GM12878 (cell line): ENCODE measurements at regions of chr16 and their contacts with region 1.

Region 1: DNA sequence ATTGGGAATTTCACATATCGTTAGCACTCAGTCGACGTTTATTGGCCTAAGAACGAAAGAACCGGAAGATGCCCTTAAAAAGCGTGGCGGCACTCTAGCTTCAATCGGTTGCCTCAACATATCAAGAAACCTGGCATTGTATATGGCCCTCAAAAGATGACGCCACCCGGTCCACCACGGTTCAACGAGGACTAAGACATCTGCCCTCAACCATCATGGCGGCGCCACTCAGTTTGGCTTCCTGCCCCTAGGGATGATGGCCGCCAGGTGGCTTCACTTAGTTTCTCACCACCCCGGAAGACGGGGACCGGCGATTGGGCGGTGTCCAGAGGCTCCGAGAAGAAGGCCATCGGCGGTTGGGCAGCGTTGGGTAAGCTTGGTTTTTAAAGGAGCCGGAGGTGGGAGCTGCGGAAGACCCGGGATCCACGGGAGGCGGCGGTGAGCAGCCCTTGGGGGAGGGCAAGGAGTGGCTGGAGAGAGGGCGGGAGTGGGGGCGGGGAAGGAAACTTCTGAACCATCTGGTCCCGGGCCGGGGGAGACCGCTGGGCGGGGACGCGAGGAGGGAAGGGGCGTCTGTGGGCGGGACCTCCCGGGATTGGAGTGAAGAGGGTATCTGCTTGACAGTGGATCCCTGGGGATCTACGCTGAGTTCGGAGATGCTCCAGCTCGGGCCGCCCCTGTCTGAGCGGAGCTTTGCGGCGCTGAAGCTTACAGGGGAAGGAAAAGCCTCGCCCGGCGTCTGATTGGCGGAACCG is at the start of gene PRR14:
- DNase-seq: peak; percentile 98
- ATAC-seq: peak; percentile 88
- H3K4me3 ChIP-seq: peak within 1 kb of the TSS; percentile 100
- H3K27ac ChIP-seq: peak within 1 kb of the TSS; percentile 91
- H3K4me1 ChIP-seq: peaks cover 15% of the 10 kb centered on the region
- H3K27me3 ChIP-seq: no peaks in the 10 kb centered on the region
- CTCF ChIP-seq: peak in 1 of 3 experiments; percentile 6; a peak in 1 of 6 replicates
- EP300 ChIP-seq: 0 out of 4 replicates have a peak, but pooled peaks of 1 of the 2 experiments have one; percentile 39
- POLR2A ChIP-seq: peak; percentile 26; the same call in 1 of the 2 replicates
- RAD21 ChIP-seq: no peak
- polyA plus RNA-seq, gene PRR14: 2.5 to 8.7 TPM

Region 2: GRCh38 chr16:30551781-30552180 is 98.8 kb before region 1 on chr16:
- CTCF ChIA-PET with region 1: no interaction called
- POLR2A ChIA-PET with region 1: no interaction called
- RAD21 ChIA-PET with region 1: no interaction called
- SMC1A ChIA-PET with region 1: no interaction called
- in situ Hi-C with region 1: no loop called
- intact Hi-C with region 1: no loop called
- DNase-seq: no peak
- ATAC-seq: no peak
- H3K4me3 ChIP-seq: no peak overlapping the region
- H3K27ac ChIP-seq: no peak overlapping the region
- H3K4me1 ChIP-seq: no peaks in the 10 kb centered on the region
- H3K27me3 ChIP-seq: no peaks in the 10 kb centered on the region
- CTCF ChIP-seq: no peak
- EP300 ChIP-seq: no peak
- POLR2A ChIP-seq: no peak
- RAD21 ChIP-seq: no peak

Region 3: GRCh38 chr16:30637942-30638341 is 12.6 kb before region 1 on chr16:
- CTCF ChIA-PET with region 1: interaction called, 16 read pairs
- POLR2A ChIA-PET with region 1: interaction called, 11 read pairs
- RAD21 ChIA-PET with region 1: interaction called, 10 read pairs
- SMC1A ChIA-PET with region 1: interaction called, 6 read pairs
- in situ Hi-C with region 1: no loop called
- intact Hi-C with region 1: no loop called
- DNase-seq: no peak
- ATAC-seq: peak; percentile 38
- H3K4me3 ChIP-seq: no peak overlapping the region
- H3K27ac ChIP-seq: no peak overlapping the region
- H3K4me1 ChIP-seq: no peaks in the 10 kb centered on the region
- H3K27me3 ChIP-seq: no peaks in the 10 kb centered on the region
- CTCF ChIP-seq: peak; percentile 61 to 70 (median 63); a peak in 5 of 6 replicates
- EP300 ChIP-seq: no peak
- POLR2A ChIP-seq: no peak
- RAD21 ChIP-seq: peak; percentile 58

Region 4: DNA sequence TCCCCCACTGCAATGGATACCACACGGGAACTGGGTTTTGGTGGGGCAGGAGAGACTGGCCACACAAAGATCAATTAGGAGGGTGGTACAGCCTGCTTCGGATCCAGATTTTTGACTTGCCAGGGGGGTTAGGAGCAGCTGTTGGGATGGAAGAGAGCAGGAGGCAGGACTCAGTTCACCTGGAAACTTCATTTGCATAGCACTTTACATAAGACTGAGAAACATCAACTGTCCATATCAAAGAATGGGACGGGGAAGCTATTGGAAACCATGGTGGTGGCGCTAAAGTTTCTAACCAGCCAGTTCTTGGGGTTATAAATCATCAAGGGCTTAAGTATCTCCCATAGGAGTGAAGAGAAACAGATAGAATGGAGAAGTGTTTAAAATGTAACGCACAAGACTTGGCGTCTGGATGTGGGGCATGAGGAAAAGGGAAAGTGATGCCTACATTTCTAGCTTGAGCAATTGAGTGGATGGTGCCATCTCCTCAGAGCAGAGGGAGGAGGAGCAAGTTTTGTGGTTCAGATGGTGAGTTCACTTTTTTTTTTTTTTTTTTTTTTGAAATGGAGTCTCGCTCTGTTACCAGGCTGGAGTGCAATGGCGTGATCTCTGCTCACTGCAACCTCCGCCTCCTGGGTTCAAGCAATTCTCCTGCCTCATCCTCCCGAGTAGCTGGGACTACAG is 42.0 kb after region 1 on chr16:
- CTCF ChIA-PET with region 1: interaction called, 24 read pairs
- POLR2A ChIA-PET with region 1: interaction called, 8 read pairs
- RAD21 ChIA-PET with region 1: interaction called, 13 read pairs
- SMC1A ChIA-PET with region 1: interaction called, 7 read pairs
- in situ Hi-C with region 1: no loop called
- intact Hi-C with region 1: no loop called
- DNase-seq: no peak
- ATAC-seq: no peak
- H3K4me3 ChIP-seq: no peak overlapping the region
- H3K27ac ChIP-seq: no peak overlapping the region
- H3K4me1 ChIP-seq: peaks cover 4% of the 10 kb centered on the region; the same call in 1 of the 2 replicates
- H3K27me3 ChIP-seq: no peaks in the 10 kb centered on the region
- CTCF ChIP-seq: no peak
- EP300 ChIP-seq: no peak
- POLR2A ChIP-seq: no peak
- RAD21 ChIP-seq: no peak

Region 5: GRCh38 chr16:30698139-30698815 is 47.7 kb after region 1 on chr16:
- CTCF ChIA-PET with region 1: interaction called, 24 read pairs
- POLR2A ChIA-PET with region 1: interaction called, 8 read pairs
- RAD21 ChIA-PET with region 1: interaction called, 13 read pairs
- SMC1A ChIA-PET with region 1: interaction called, 7 read pairs
- in situ Hi-C with region 1: no loop called
- intact Hi-C with region 1: no loop called
- DNase-seq: peak; percentile 89
- ATAC-seq: peak; percentile 82
- H3K4me3 ChIP-seq: peak overlapping the region; percentile 78
- H3K27ac ChIP-seq: peak overlapping the region; percentile 98
- H3K4me1 ChIP-seq: peaks cover 10% of the 10 kb centered on the region
- H3K27me3 ChIP-seq: no peaks in the 10 kb centered on the region
- CTCF ChIP-seq: no peak
- EP300 ChIP-seq: peak in 1 of 2 experiments; percentile 57; a peak in 1 of 4 replicates
- POLR2A ChIP-seq: peak; percentile 95
- RAD21 ChIP-seq: no peak